Panc1 (cell line): ENCODE measurements at regions of chr13 and their contacts with region 1.

Region 1: GRCh38 chr13:38849315-38849714 is 141.3 kb downstream of the STOML3 start:
- DNase-seq: no peak
- ATAC-seq: no peak
- H3K4me3 ChIP-seq: no peak overlapping the region
- H3K27ac ChIP-seq: no peak overlapping the region
- H3K4me1 ChIP-seq: no peaks in the 10 kb centered on the region
- H3K27me3 ChIP-seq: no peaks in the 10 kb centered on the region
- CTCF ChIP-seq: no peak

Region 2: GRCh38 chr13:38135592-38135991 is 713.7 kb before region 1 on chr13:
- CTCF ChIA-PET with region 1: no interaction called
- POLR2A ChIA-PET with region 1: no interaction called
- in situ Hi-C with region 1: no loop called
- intact Hi-C with region 1: no loop called
- DNase-seq: no peak
- ATAC-seq: no peak
- H3K4me3 ChIP-seq: no peak overlapping the region
- H3K27ac ChIP-seq: no peak overlapping the region
- H3K4me1 ChIP-seq: no peaks in the 10 kb centered on the region
- H3K27me3 ChIP-seq: no peaks in the 10 kb centered on the region
- CTCF ChIP-seq: no peak

Region 3: GRCh38 chr13:38821770-38822551 is 27.4 kb before region 1 on chr13:
- CTCF ChIA-PET with region 1: no interaction called
- POLR2A ChIA-PET with region 1: interaction called, 10 read pairs
- in situ Hi-C with region 1: no loop called
- intact Hi-C with region 1: no loop called
- DNase-seq: no peak
- ATAC-seq: no peak
- H3K4me3 ChIP-seq: no peak overlapping the region
- H3K27ac ChIP-seq: no peak overlapping the region
- H3K4me1 ChIP-seq: no peaks in the 10 kb centered on the region
- H3K27me3 ChIP-seq: no peaks in the 10 kb centered on the region
- CTCF ChIP-seq: no peak

Region 4: DNA sequence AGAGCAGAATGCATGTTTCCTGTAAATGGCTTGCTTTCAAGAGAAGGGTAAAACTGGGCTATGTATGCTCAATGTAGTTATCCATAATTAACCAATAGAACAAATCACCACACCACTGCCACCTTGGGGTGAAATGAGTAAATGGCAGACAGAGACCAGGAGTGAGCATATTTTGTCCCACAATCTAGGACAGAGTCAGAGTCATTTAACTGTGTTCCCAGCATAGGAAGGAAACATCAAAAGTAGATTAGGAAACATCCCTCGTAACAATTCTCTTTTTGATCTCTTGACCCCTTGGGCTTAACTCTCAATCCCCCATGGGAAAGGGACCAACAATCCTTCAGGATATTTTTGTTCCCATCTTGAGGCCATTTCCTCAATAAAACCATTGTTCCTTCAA is 413.7 kb after region 1 on chr13:
- CTCF ChIA-PET with region 1: no interaction called
- POLR2A ChIA-PET with region 1: no interaction called
- in situ Hi-C with region 1: no loop called
- intact Hi-C with region 1: no loop called
- DNase-seq: no peak
- ATAC-seq: peak; percentile 71; the same call in 1 of the 2 replicates
- H3K4me3 ChIP-seq: no peak overlapping the region
- H3K27ac ChIP-seq: no peak overlapping the region
- H3K4me1 ChIP-seq: no peaks in the 10 kb centered on the region
- H3K27me3 ChIP-seq: no peaks in the 10 kb centered on the region
- CTCF ChIP-seq: peak; percentile 69